Naive thymus-derived CD4-positive, alpha-beta T cell (primary cell): ENCODE measurements at regions of chr20 and their contacts with region 1.

Region 1: DNA sequence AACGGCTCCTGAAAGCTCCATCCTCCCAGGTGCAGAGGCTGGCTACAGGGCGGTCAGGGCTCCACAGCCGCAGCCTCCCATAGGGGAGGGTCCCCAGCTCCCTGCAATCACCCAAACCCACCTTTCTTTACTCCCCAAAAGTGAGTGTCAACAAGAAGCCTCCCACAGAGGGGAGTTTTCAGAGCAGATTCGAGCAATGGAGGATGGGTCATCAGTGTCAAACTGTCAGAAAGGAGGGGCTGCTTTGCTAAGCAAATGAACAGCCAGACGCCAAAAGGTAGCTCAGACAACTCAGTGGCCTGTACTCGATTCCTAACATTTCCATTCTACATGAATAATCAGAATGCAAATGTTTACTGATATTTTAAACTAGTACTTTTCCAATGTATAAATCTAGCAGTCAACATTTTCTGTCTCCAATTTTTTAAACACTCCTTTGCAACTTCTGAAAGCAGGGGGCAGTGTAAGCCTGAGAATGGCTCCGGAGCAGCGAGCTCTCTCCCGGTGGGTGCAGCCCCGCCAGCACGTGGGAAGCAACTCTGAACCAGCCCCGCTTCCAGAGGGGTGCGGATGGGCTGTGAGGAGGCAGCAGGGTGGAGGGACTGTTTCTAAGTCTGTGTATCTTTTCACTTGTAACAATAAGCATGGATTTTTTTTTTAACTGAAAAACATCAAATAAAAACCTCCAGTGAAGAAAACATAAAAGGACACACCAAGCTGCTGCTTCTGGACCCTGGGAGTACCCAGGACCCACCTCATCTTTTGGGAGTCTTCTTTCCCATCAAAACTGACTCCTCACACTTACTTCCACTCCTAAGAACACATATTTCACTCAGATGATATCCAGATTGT is 54.9 kb downstream of the TAF4 start:
- DNase-seq: peak; percentile 36 to 70 (median 66)
- ATAC-seq: peak; percentile 81
- H3K4me3 ChIP-seq: no peak overlapping the region
- H3K4me3 Mint-ChIP-seq: peak overlapping the region in 1 of 10 donors; percentile 6
- H3K27ac ChIP-seq: no peak overlapping the region
- H3K27ac Mint-ChIP-seq: peak overlapping the region in 6 of 9 donors; percentile 6 to 65 (median 43)
- H3K4me1 ChIP-seq: peaks cover 0 to 4% of the 10 kb centered on the region in 2 donors
- H3K4me1 Mint-ChIP-seq: peaks cover 6 to 24% (median 10%) of the 10 kb centered on the region in 7 donors
- H3K27me3 ChIP-seq: no peaks in the 10 kb centered on the region
- H3K27me3 Mint-ChIP-seq: no peaks in the 10 kb centered on the region

Region 2: DNA sequence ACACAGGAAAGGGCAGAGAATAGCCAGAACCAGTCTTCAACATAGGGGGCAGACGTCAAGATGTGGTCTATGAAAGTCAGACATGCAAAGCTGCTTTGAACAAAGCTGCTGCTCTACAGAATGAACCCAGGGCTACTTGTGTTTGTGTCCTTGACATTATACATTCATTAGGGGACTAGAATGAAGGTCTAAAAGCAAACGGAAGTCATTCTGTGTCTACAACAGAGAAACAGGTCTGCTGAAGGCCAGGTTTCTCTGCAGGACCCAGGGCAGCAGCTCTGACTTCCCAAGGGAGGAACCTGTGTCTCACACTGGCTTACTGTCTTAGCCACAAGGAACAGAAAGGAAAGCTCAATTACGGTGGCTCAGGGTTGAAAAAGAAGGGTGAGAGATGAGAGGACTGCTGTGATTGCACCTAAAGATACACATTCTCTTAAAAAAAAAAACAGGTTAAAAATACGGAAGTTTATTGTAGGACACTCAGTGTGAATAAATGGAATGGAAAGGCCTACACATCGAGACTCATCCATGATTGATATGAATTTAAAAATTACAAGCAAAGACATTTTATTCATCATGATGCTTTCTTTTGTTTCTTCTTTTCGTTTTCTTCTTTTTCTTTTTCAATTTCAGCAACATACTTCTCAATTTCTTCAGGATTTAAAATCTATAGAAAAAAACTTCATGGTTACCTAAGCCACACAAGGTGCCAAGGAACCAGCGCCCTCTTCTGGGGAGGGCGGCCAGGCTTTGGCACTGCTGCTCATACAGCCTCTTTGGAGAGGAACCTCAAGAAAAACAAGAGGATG is 125.7 kb after region 1 on chr20:
- CTCF ChIA-PET with region 1: interaction called, 27 read pairs
- POLR2A ChIA-PET with region 1: interaction called, 6 read pairs
- intact Hi-C with region 1: loop called (anchors 1 kb)
- DNase-seq: peak; percentile 54 to 81 (median 75)
- ATAC-seq: peak; percentile 81
- H3K4me3 ChIP-seq: no peak overlapping the region
- H3K4me3 Mint-ChIP-seq: peak overlapping the region in 1 of 10 donors; percentile 20
- H3K27ac ChIP-seq: peak overlapping the region; percentile 18
- H3K27ac Mint-ChIP-seq: peak overlapping the region; percentile 60 to 94 (median 87)
- H3K4me1 ChIP-seq: peaks cover 10 to 15% of the 10 kb centered on the region in 2 donors
- H3K4me1 Mint-ChIP-seq: peaks cover 33 to 55% (median 45%) of the 10 kb centered on the region in 7 donors
- H3K27me3 ChIP-seq: no peaks in the 10 kb centered on the region
- H3K27me3 Mint-ChIP-seq: no peaks in the 10 kb centered on the region

Region 3: GRCh38 chr20:62156592-62157386 is 146.0 kb after region 1 on chr20:
- CTCF ChIA-PET with region 1: interaction called, 7 read pairs
- POLR2A ChIA-PET with region 1: no interaction called
- intact Hi-C with region 1: loop called (anchors 1 kb)
- DNase-seq: peak; percentile 56 to 75 (median 69)
- ATAC-seq: peak; percentile 93
- H3K4me3 ChIP-seq: no peak overlapping the region
- H3K4me3 Mint-ChIP-seq: peak overlapping the region in 1 of 10 donors; percentile 45
- H3K27ac ChIP-seq: no peak overlapping the region
- H3K27ac Mint-ChIP-seq: no peak overlapping the region
- H3K4me1 ChIP-seq: peaks cover 0 to 3% of the 10 kb centered on the region in 2 donors
- H3K4me1 Mint-ChIP-seq: peaks cover 7 to 30% (median 19%) of the 10 kb centered on the region in 7 donors
- H3K27me3 ChIP-seq: no peaks in the 10 kb centered on the region
- H3K27me3 Mint-ChIP-seq: no peaks in the 10 kb centered on the region